B cell (primary cell): ENCODE measurements at regions of chr7 and their contacts with region 1.

Region 1: GRCh38 chr7:22103255-22103969 is 157.7 kb upstream of the CDCA7L start:
- DNase-seq: peak; percentile 75
- ATAC-seq: peak; percentile 79
- H3K4me3 ChIP-seq: no peak overlapping the region
- H3K4me3 Mint-ChIP-seq: no peak overlapping the region
- H3K27ac ChIP-seq: no peak overlapping the region
- H3K27ac Mint-ChIP-seq: no peak overlapping the region
- H3K4me1 ChIP-seq: no peaks in the 10 kb centered on the region
- H3K4me1 Mint-ChIP-seq: peaks cover 3% of the 10 kb centered on the region
- H3K27me3 ChIP-seq: peaks cover 0 to 3% (median 1%) of the 10 kb centered on the region in 4 experiments
- H3K27me3 Mint-ChIP-seq: peaks cover 22% of the 10 kb centered on the region
- CTCF ChIP-seq: peak; percentile 80

Region 2: DNA sequence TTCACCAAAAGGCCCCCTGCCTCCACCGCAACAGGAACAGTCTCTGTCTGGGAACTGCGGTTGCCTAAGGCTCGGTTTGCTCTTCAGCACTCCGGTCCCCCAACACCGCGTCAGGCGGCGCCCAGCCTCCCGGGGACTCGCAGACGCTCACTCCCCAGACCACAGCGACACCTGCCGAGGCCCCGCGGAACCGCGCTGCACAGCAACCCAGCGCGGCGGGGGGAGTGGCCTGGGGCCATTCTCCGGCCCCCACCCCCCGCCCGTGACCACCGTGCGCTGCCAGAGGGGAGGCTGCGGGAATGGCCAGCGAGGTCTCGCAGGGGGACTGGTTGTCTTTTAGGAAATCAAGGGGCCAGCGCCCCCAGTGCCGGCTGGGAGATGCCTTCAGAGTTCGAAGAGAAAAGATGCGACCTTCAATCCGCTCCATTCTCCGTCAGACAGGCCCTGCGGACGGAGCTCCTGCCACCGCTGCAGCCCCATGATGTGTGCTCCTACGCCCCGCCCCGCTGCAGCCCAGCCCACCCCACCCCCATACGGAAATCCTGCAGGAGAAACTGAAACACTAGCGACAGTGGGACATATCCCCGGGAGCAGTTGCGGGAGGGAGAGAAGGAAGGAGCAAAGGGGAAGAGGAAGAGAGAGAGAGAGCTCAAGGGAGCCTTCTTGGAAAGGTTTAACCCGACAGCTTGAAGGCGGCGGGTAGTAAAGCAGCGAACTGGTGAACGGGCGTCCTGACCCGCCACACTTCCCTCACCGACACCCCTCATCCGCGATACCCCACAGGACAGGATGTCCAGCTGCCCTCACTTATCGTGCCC is 20.3 kb before region 1 on chr7:
- CTCF ChIA-PET with region 1: interaction called, 11 read pairs
- POLR2A ChIA-PET with region 1: no interaction called
- intact Hi-C with region 1: no loop called
- DNase-seq: peak; percentile 92
- ATAC-seq: peak; percentile 97
- H3K4me3 ChIP-seq: peak overlapping the region; percentile 58 to 80 (median 72)
- H3K4me3 Mint-ChIP-seq: peak overlapping the region; percentile 94
- H3K27ac ChIP-seq: peak overlapping the region; percentile 63 to 68
- H3K27ac Mint-ChIP-seq: peak overlapping the region; percentile 90
- H3K4me1 ChIP-seq: peaks cover 8 to 14% of the 10 kb centered on the region in 2 donors
- H3K4me1 Mint-ChIP-seq: peaks cover 18% of the 10 kb centered on the region
- H3K27me3 ChIP-seq: peaks cover 0 to 11% (median 7%) of the 10 kb centered on the region in 4 experiments
- H3K27me3 Mint-ChIP-seq: peaks cover 25% of the 10 kb centered on the region
- CTCF ChIP-seq: peak; percentile 98

Region 3: GRCh38 chr7:22488643-22489462 is 385.4 kb after region 1 on chr7:
- CTCF ChIA-PET with region 1: interaction called, 109 read pairs
- POLR2A ChIA-PET with region 1: no interaction called
- intact Hi-C with region 1: loop called (anchors 1 kb)
- DNase-seq: peak; percentile 79
- ATAC-seq: peak; percentile 72
- H3K4me3 ChIP-seq: no peak overlapping the region
- H3K4me3 Mint-ChIP-seq: no peak overlapping the region
- H3K27ac ChIP-seq: no peak overlapping the region
- H3K27ac Mint-ChIP-seq: no peak overlapping the region
- H3K4me1 ChIP-seq: no peaks in the 10 kb centered on the region
- H3K4me1 Mint-ChIP-seq: peaks cover 5% of the 10 kb centered on the region
- H3K27me3 ChIP-seq: no peaks in the 10 kb centered on the region
- H3K27me3 Mint-ChIP-seq: no peaks in the 10 kb centered on the region
- CTCF ChIP-seq: peak; percentile 92

Region 4: DNA sequence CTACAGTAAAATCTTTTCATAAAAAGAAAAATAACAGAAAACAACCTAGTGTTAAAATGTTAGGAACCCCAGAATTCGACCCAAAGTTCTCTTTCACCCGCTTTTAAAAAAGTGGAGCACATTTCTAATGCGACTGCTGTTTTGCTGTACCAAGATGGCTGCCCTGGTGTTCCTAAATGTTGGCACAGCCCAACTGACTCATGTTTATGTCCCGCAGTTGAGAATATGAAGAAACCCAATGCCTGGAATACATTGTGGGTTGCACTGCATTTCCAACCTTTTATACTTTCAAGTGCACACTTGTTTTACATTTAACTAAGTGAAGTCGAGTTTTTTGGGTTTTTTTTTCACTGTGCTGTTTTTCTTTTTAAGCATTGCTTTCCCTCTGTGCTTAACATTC is 395.6 kb after region 1 on chr7:
- CTCF ChIA-PET with region 1: interaction called, 72 read pairs
- POLR2A ChIA-PET with region 1: no interaction called
- intact Hi-C with region 1: loop called (anchors 2 kb)
- DNase-seq: no peak
- ATAC-seq: no peak
- H3K4me3 ChIP-seq: no peak overlapping the region
- H3K4me3 Mint-ChIP-seq: no peak overlapping the region
- H3K27ac ChIP-seq: no peak overlapping the region
- H3K27ac Mint-ChIP-seq: no peak overlapping the region
- H3K4me1 ChIP-seq: peaks cover 0 to 6% of the 10 kb centered on the region in 2 donors
- H3K4me1 Mint-ChIP-seq: peaks cover 6% of the 10 kb centered on the region
- H3K27me3 ChIP-seq: peaks cover 0 to 4% (median 2%) of the 10 kb centered on the region in 4 experiments
- H3K27me3 Mint-ChIP-seq: peaks cover 8% of the 10 kb centered on the region
- CTCF ChIP-seq: no peak